ENCODE measurements at regions of chr10 and their contacts with region 1.

Region 1: DNA sequence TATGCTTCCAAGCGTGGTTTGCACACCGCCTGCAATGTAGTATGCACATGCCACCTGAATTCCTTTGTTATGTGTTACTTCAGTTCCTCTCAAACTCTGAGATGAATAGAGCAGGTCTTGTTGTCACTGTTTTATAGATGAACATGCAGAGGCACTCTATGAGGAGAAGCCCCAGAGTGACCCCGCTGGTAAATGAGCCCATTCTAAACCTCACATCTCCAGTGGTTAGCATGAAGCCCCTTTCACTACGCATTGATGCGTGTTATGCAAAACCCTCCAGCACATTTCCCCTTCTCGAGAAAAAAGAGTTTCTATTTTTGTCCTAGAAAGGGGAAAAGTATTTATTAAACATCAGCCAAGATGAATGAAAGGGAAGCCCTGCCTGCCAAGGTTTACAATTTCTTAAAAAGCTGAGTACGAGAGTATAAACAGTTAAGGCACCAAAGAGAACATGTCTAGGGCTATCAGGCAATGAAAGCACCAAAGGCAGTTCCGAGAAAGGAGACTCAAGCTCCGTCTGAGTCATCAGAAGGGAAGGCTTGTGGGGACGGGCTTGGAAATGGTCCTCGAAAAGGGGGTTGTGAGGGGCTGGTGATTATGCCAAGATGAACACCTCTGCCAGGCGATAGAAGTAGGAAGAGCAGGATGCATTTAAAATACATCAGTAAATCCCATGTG is 58.7 kb upstream of the PFKP start:
- DNase-seq: no peak
- ATAC-seq: no peak

Region 2: DNA sequence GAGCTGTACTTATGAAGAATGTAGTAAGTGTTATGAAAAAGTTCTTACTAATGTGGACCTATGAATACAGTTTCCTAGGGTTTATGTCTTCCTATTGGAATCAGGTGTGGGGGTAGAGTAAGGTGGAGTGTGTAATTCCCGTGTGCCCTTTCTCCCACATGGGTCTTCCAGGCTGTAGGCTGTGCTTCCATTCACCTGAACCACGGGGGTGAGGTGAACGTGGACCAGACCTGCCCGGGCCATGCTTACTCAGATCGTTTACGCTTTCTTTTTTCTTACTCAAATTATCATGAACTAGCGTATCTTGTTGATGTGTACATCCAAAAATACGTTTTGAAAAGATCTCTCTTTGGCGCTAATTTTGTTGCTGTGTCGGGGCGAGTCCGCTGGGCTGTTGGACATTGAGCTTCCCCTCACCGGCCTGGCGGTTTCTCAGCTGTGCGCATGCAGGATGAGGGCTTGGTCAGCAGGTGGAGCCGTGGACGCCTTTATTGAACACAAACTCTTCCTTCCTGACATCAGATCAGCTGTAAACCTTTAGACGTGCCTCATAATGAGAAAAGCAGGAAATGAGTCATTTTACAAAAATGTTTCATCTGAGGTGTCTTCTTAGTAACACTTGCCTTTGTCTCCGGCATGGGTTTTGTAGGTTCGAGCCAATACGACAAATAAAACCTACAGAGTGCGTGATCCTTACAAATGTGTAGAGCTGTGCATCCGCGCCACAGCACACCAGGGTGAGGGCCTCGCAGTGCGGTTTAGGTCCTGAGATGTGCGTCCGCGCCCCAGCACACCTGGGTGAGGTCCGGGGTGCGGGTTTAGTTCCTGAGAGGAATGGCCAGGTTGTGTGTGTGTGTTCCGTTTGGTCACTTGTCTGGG is 1898.6 kb before region 1 on chr10:
- intact Hi-C with region 1: loop called (anchors 5 kb)
- DNase-seq: peak; percentile 10
- ATAC-seq: peak; percentile 74

Region 3: GRCh38 chr10:3136763-3137611 is 128.3 kb after region 1 on chr10:
- intact Hi-C with region 1: no loop called
- DNase-seq: no peak
- ATAC-seq: peak; percentile 89

Region 4: GRCh38 chr10:3757638-3758490 is 749.2 kb after region 1 on chr10:
- intact Hi-C with region 1: no loop called
- DNase-seq: no peak
- ATAC-seq: no peak